Activated B cell treated with CpG ODN at 0.5 μM for 24 hours (primary cell): ENCODE measurements at regions of chr6 and their contacts with region 1.

Region 1: DNA sequence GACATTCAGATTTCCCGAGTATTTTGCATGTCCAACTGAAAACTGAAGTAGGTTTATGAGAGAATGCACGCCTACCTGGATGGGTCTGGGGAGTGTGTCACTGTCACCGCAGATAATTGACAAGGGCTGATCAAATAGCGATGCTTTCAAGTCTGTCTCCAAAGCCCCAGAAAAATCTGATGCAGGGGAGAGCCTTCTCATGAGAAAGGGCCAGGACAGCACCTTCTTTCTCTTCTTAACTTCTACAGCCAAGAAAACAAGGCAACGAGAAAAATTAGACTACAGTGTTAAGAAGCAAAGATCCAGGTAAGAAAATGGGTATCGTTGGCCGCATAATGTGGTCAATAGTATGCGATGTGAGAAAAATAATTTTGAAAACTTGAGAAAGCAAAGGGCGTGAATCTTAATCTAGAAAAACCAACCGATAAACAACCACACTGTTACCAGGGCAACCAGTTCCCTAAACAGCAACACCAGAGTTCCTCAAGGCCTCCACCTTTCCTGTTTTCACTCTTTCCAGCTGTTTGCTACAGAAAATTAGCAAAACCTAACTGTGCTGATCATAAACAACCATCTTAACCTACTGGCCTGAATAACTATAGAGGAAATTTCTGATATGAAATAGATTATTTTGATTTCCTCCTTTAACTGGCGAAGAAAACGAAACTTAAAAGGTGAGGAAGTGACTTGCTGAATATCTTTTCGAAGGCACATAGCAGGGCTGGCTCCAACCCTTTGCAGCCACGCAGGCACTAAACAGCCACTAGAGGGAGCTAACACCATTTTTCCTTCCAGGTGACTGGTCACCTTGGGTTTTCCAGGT is 2.6 kb downstream of the TAGAP start:
- DNase-seq: no peak
- ATAC-seq: peak; percentile 34
- H3K4me3 Mint-ChIP-seq: peak overlapping the region; percentile 99
- H3K27ac Mint-ChIP-seq: peak overlapping the region; percentile 100
- H3K4me1 Mint-ChIP-seq: peaks cover 76% of the 10 kb centered on the region
- H3K27me3 Mint-ChIP-seq: no peaks in the 10 kb centered on the region
- CTCF ChIP-seq: peak; percentile 91

Region 2: GRCh38 chr6:158718461-158719046 is 323.7 kb before region 1 on chr6:
- CTCF ChIA-PET with region 1: no interaction called
- POLR2A ChIA-PET with region 1: interaction called, 7 read pairs
- intact Hi-C with region 1: loop called (anchors 2 kb)
- DNase-seq: no peak
- ATAC-seq: no peak
- H3K4me3 Mint-ChIP-seq: no peak overlapping the region
- H3K27ac Mint-ChIP-seq: peak overlapping the region; percentile 97
- H3K4me1 Mint-ChIP-seq: peaks cover 78% of the 10 kb centered on the region
- H3K27me3 Mint-ChIP-seq: no peaks in the 10 kb centered on the region
- CTCF ChIP-seq: no peak

Region 3: DNA sequence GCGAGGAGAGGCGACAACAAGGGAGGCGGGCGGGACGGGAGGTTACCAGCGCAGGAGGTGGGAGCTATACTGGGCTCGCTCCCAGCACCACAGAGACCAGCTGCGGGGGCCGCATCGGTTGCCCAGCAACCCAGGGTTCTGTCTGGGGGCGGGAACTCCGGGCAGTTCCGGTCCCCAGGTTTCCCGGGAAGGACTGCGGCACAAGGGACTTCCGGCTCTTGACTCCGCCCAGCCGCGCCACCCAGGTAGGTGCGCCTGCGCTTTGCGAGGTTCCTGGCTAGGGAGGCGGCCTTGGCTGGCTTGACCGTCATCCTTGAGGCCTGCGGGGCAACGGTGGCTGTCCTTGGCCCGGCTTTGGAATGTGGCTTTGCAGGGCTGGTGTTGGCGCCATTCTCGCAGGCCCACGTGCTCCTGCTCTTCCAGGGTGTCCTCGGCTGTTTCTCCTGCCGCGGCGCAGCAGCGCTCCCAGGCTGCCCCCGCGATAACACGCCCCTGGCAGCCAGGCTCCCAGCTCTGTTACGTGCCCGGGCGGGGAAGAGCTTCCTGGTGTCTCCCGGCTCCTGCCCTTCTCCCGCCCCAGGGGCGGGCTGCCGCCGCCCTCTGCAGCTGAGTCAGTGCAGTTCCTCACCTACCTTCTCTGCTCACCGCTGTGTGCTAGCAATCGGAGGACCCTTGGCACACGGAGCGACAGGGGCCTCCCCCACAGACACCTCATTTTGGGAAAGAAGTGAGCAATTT is 42.4 kb before region 1 on chr6 and contains the start of gene RSPH3:
- CTCF ChIA-PET with region 1: interaction called, 113 read pairs
- POLR2A ChIA-PET with region 1: interaction called, 19 read pairs
- intact Hi-C with region 1: no loop called
- DNase-seq: peak; percentile 87
- ATAC-seq: peak; percentile 90
- H3K4me3 Mint-ChIP-seq: peak within 1 kb of the TSS; percentile 94
- H3K27ac Mint-ChIP-seq: peak within 1 kb of the TSS; percentile 85
- H3K4me1 Mint-ChIP-seq: peaks cover 27% of the 10 kb centered on the region
- H3K27me3 Mint-ChIP-seq: no peaks in the 10 kb centered on the region
- CTCF ChIP-seq: no peak
- total RNA-seq, gene RSPH3: 1.9 and 2.4 TPM in 2 replicates

Region 4: DNA sequence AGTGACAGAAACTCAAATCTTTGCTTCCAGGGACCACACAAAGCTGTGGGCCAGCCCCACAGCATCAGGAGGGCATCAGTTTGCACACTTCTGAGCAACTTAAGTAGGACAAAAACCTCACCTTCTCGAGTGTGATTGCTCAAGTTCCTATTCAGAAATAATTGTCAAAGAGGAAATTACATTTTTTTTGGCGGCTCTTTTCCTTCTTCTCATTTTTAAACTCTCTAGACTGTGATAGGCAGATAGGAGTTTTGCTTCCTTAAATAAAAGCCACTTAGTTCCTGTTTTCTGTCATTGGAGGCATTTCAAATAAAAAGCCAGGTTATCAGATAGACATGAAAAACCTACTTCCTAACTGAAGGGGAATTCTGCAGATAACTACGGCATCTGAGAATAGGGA is 13.8 kb after region 1 on chr6:
- CTCF ChIA-PET with region 1: interaction called, 4 read pairs
- POLR2A ChIA-PET with region 1: interaction called, 82 read pairs
- intact Hi-C with region 1: loop called (anchors 1 kb)
- DNase-seq: no peak
- ATAC-seq: peak; percentile 68
- H3K4me3 Mint-ChIP-seq: peak overlapping the region; percentile 70
- H3K27ac Mint-ChIP-seq: peak overlapping the region; percentile 88
- H3K4me1 Mint-ChIP-seq: peaks cover 79% of the 10 kb centered on the region
- H3K27me3 Mint-ChIP-seq: no peaks in the 10 kb centered on the region
- CTCF ChIP-seq: no peak

Region 5: GRCh38 chr6:159084493-159085091 is 42.4 kb after region 1 on chr6:
- CTCF ChIA-PET with region 1: interaction called, 5 read pairs
- POLR2A ChIA-PET with region 1: interaction called, 174 read pairs
- intact Hi-C with region 1: loop called (anchors 1 kb)
- DNase-seq: no peak
- ATAC-seq: no peak
- H3K4me3 Mint-ChIP-seq: no peak overlapping the region
- H3K27ac Mint-ChIP-seq: no peak overlapping the region
- H3K4me1 Mint-ChIP-seq: peaks cover 30% of the 10 kb centered on the region
- H3K27me3 Mint-ChIP-seq: no peaks in the 10 kb centered on the region
- CTCF ChIP-seq: no peak

Region 6: GRCh38 chr6:159116343-159116742 is 74.1 kb after region 1 on chr6:
- CTCF ChIA-PET with region 1: no interaction called
- POLR2A ChIA-PET with region 1: interaction called, 1,007 read pairs
- intact Hi-C with region 1: loop called (anchors 1 kb)
- DNase-seq: peak; percentile 71
- ATAC-seq: peak; percentile 75
- H3K4me3 Mint-ChIP-seq: peak overlapping the region; percentile 63
- H3K27ac Mint-ChIP-seq: peak overlapping the region; percentile 99
- H3K4me1 Mint-ChIP-seq: peaks cover 86% of the 10 kb centered on the region
- H3K27me3 Mint-ChIP-seq: no peaks in the 10 kb centered on the region
- CTCF ChIP-seq: no peak

Region 7: DNA sequence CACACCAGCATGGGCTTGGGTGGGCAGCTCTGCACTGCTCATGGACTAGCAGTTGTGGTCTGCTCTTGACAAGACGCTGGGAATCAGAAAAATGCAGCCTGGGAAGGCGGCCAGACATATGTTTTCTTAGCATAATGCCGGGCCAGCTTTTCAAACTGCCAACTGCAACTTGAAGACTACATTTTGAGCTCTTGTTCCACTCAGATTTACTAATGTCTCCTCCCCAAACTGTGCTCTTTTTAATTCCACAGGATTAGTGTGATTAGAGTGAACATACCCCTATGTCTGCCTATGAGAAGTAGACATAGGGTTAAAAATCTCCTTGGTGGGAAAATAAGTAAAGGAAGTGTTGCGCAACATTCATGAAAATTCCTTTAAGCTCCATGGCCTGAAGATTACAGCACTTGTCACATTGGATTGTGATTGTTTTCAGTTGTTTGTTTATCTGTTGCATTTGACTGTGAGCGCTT is 121.7 kb after region 1 on chr6:
- CTCF ChIA-PET with region 1: no interaction called
- POLR2A ChIA-PET with region 1: no interaction called
- intact Hi-C with region 1: no loop called
- DNase-seq: no peak
- ATAC-seq: no peak
- H3K4me3 Mint-ChIP-seq: no peak overlapping the region
- H3K27ac Mint-ChIP-seq: no peak overlapping the region
- H3K4me1 Mint-ChIP-seq: peaks cover 5% of the 10 kb centered on the region
- H3K27me3 Mint-ChIP-seq: peaks cover 41% of the 10 kb centered on the region
- CTCF ChIP-seq: no peak

Region 8: GRCh38 chr6:159726918-159727716 is 684.9 kb after region 1 on chr6 and contains the start of gene WTAP:
- CTCF ChIA-PET with region 1: no interaction called
- POLR2A ChIA-PET with region 1: no interaction called
- intact Hi-C with region 1: loop called (anchors 2 kb)
- DNase-seq: peak; percentile 93
- ATAC-seq: peak; percentile 83
- H3K4me3 Mint-ChIP-seq: peak within 1 kb of the TSS; percentile 93
- H3K27ac Mint-ChIP-seq: peak within 1 kb of the TSS; percentile 99
- H3K4me1 Mint-ChIP-seq: peaks cover 50% of the 10 kb centered on the region
- H3K27me3 Mint-ChIP-seq: no peaks in the 10 kb centered on the region
- CTCF ChIP-seq: no peak
- total RNA-seq, gene WTAP: 124 and 141 TPM in 2 replicates